Transverse colon (tissue), 4 donors: ENCODE measurements at regions of chr9 and their contacts with region 1.

Region 1: DNA sequence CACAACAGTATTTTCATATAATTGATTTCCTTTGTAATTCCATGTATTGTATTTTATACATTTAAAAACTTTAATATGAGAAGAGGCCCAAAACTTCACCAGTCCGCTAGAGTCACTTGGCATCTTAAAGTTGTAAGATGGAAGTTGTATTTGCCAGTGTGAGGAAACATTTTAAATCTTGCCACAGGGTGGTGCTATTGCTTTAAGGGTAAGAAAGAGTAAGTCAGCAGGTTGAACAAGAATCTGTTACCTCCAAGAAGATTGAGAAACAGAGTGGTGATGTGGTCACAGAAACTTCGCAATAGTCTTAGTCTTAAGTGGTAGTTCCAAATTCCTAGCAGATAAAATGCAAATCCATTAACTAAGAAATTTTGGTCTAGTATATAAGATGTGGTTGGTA is 39.8 kb upstream of the RANBP6 start:
- DNase-seq: peak; percentile 22
- H3K4me3 ChIP-seq: no peak overlapping the region
- H3K27ac ChIP-seq: no peak overlapping the region
- H3K4me1 ChIP-seq: no peaks in the 10 kb centered on the region
- H3K27me3 ChIP-seq: no peaks in the 10 kb centered on the region
- CTCF ChIP-seq: peak; percentile 50 to 62 (median 52)
- EP300 ChIP-seq: no peak
- POLR2A ChIP-seq: no peak

Region 2: GRCh38 chr9:5879419-5880181 is 175.6 kb before region 1 on chr9:
- in situ Hi-C with region 1: loop called in 1 of 4 experiments (anchors 5 kb)
- intact Hi-C with region 1: loop called (anchors 10 kb)
- DNase-seq: no peak
- H3K4me3 ChIP-seq: no peak overlapping the region
- H3K27ac ChIP-seq: no peak overlapping the region
- H3K4me1 ChIP-seq: no peaks in the 10 kb centered on the region
- H3K27me3 ChIP-seq: no peaks in the 10 kb centered on the region
- CTCF ChIP-seq: no peak
- EP300 ChIP-seq: no peak
- POLR2A ChIP-seq: no peak

Region 3: DNA sequence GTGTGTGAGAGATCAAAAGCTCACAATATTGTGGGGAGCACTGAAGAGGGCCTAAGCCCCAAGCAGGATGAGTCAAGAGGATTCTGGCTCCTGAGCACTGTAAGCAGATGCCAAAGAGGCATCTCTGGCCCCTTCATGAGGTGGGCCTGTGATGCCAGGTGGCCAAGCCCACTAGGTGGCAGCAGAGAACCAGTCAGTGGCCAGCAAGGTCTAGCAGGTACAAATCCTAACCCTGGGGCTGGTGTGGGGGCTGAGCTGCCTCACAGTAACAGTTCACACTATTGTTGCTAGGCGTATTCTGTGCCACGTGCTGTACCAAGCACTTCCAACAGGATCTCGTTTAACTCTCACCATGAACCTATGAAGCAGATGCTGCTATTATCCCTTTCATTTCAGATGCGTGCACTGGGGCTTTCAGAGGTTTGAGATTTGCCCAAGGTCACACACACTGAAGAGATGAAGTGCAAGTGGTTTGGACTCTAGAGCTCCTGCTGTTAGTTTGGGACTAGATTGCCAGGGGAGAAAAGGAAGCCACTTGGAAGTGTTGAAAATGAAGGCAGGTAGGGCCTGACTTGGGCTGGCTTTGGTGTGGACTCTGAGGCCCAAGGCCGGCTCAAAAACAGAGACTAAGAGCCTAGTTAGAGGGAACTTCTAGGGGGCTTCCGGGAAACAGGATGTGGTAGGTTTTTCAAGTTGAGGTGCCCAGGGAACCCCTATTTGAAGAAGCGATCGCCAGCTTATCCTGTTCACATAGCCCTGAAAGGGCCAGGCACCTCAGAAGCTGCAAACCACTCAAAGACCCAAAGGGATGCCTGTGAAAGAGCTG is 168.9 kb before region 1 on chr9:
- in situ Hi-C with region 1: loop called in 3 of 4 experiments (anchors 5 to 10 kb)
- intact Hi-C with region 1: loop called (anchors 10 kb)
- DNase-seq: peak; percentile 73
- H3K4me3 ChIP-seq: no peak overlapping the region
- H3K27ac ChIP-seq: no peak overlapping the region
- H3K4me1 ChIP-seq: no peaks in the 10 kb centered on the region
- H3K27me3 ChIP-seq: no peaks in the 10 kb centered on the region
- CTCF ChIP-seq: peak; percentile 72 to 88 (median 80)
- EP300 ChIP-seq: no peak
- POLR2A ChIP-seq: no peak

Region 4: GRCh38 chr9:5899292-5899691 is 155.9 kb before region 1 on chr9:
- in situ Hi-C with region 1: loop called in 1 of 4 experiments (anchors 10 kb)
- intact Hi-C with region 1: no loop called
- DNase-seq: no peak
- H3K4me3 ChIP-seq: no peak overlapping the region
- H3K27ac ChIP-seq: no peak overlapping the region
- H3K4me1 ChIP-seq: peaks cover 0 to 8% (median 0%) of the 10 kb centered on the region in 4 donors
- H3K27me3 ChIP-seq: no peaks in the 10 kb centered on the region
- CTCF ChIP-seq: no peak
- EP300 ChIP-seq: no peak
- POLR2A ChIP-seq: no peak

Region 5: GRCh38 chr9:6008169-6008979 is 46.8 kb before region 1 on chr9:
- in situ Hi-C with region 1: no loop called
- intact Hi-C with region 1: no loop called
- DNase-seq: peak; percentile 96
- H3K4me3 ChIP-seq: peak overlapping the region; percentile 88 to 100 (median 93)
- H3K27ac ChIP-seq: peak overlapping the region; percentile 98 to 100 (median 99)
- H3K4me1 ChIP-seq: peaks cover 0 to 52% (median 15%) of the 10 kb centered on the region in 4 donors
- H3K27me3 ChIP-seq: no peaks in the 10 kb centered on the region
- CTCF ChIP-seq: no peak
- EP300 ChIP-seq: no peak
- POLR2A ChIP-seq: peak; percentile 63

Region 6: DNA sequence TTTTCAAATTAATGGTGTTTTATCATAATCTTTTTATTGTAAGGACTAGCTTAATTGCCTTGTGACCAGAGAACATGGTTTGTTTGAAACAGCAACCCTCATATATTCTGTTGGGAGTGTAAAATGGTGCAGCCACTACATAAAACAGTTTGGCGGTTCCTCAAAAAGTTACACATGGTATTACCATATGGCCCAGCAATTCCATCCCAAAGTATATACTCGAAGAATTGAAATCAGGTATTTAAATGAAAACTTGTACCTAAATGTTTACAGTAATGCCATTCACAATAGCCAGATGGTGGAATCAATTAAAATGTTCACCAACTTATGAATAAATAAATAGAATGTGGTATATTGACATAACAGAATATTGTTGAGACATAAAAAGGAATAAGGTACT is 145.5 kb after region 1 on chr9:
- in situ Hi-C with region 1: no loop called
- intact Hi-C with region 1: no loop called
- DNase-seq: no peak
- H3K4me3 ChIP-seq: no peak overlapping the region
- H3K27ac ChIP-seq: no peak overlapping the region
- H3K4me1 ChIP-seq: peaks cover 0 to 11% (median 3%) of the 10 kb centered on the region in 4 donors
- H3K27me3 ChIP-seq: peaks cover 7% of the 10 kb centered on the region
- CTCF ChIP-seq: no peak
- EP300 ChIP-seq: no peak
- POLR2A ChIP-seq: no peak

Region 7: DNA sequence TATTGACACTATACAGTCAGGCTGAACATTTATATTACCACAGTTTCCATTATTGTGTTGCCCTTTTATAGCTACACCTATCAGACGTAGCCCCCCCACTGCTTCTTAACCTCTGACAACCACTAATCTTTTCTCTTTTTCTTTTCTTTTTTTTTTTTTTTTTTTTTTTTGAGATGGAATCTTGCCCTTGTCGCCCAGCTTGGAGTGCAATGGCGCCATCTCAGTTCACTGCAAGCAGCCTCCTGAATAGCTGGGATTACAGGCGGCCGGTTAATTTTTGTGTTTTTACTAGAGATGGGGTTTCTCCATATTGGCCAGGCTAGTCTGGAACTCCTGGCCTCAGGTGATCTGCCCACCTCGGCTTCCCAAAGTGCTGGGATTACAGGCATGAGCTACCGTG is 433.2 kb after region 1 on chr9:
- in situ Hi-C with region 1: no loop called
- intact Hi-C with region 1: no loop called
- DNase-seq: no peak
- H3K4me3 ChIP-seq: no peak overlapping the region
- H3K27ac ChIP-seq: no peak overlapping the region
- H3K4me1 ChIP-seq: no peaks in the 10 kb centered on the region
- H3K27me3 ChIP-seq: no peaks in the 10 kb centered on the region
- CTCF ChIP-seq: no peak
- EP300 ChIP-seq: no peak
- POLR2A ChIP-seq: no peak